Endothelial cell of umbilical vein (primary cell): ENCODE measurements at regions of chr3 and their contacts with region 1.

Region 1: GRCh38 chr3:105448338-105448982 is 81.8 kb downstream of the ALCAM start:
- DNase-seq: no peak
- H3K4me3 ChIP-seq: no peak overlapping the region
- H3K27ac ChIP-seq: no peak overlapping the region
- H3K4me1 ChIP-seq: no peaks in the 10 kb centered on the region
- H3K27me3 ChIP-seq: no peaks in the 10 kb centered on the region
- CTCF ChIP-seq: no peak
- POLR2A ChIP-seq: no peak

Region 2: GRCh38 chr3:105436687-105437086 is 11.8 kb before region 1 on chr3:
- CTCF ChIA-PET with region 1: interaction called, 11 read pairs
- POLR2A ChIA-PET with region 1: no interaction called
- dilution Hi-C with region 1: no loop called
- intact Hi-C with region 1: no loop called
- DNase-seq: no peak
- H3K4me3 ChIP-seq: no peak overlapping the region
- H3K27ac ChIP-seq: no peak overlapping the region
- H3K4me1 ChIP-seq: no peaks in the 10 kb centered on the region
- H3K27me3 ChIP-seq: no peaks in the 10 kb centered on the region
- CTCF ChIP-seq: no peak
- POLR2A ChIP-seq: no peak